ENCODE measurements at regions of chr11 and their contacts with region 1.

Region 1: GRCh38 chr11:126113515-126113957 is 50.9 kb upstream of the CDON start:
- DNase-seq: peak; percentile 84 to 89
- H3K4me3 ChIP-seq: no peak overlapping the region
- H3K27ac ChIP-seq: peak overlapping the region; percentile 80 to 84
- H3K4me1 ChIP-seq: peaks cover 6 to 14% of the 10 kb centered on the region in 2 donors
- H3K27me3 ChIP-seq: no peaks in the 10 kb centered on the region
- CTCF ChIP-seq: no peak
- POLR2A ChIP-seq: no peak

Region 2: DNA sequence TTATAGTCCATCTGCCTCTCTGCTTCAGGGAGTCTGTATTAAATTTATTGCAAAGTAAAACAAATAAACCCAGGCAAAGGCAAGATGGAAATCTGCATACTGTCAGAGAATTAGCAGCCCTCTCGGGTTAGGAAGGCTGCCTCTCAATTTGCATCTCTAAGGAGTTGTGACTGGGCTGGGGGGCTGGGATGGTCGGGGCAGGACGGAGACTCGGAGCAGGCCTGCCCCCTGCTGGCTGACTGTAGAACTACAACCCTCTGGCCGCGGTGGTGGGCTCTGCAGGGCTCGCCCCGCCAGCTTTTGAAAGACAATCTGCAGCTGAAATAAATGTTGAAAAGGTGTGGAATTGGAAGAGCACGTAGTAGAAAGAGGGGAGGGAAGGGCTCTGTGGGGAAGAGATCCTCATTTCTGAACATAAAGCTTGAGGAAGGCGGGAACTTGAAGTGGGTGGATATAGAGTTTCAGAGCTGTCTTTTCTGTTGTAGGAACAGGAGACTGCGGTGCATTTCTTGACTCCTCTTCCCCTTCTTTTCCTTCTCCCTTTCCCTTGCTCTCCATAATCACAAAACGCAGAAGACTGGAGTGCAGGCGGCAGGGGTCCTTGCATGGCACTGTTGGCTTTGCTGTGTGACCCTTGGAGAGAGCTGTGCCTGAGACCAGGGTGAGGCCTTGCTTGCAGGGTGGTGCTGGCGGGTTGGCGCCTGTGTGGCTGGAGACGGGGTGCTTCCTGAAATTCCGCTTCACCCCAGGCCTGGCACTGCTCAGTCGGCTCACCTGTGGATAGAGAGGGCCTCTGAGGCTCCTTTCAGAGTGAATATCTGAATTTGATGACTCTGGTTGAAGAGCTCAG is 971.6 kb before region 1 on chr11:
- intact Hi-C with region 1: no loop called
- DNase-seq: no peak
- H3K4me3 ChIP-seq: no peak overlapping the region
- H3K27ac ChIP-seq: no peak overlapping the region
- H3K4me1 ChIP-seq: no peaks in the 10 kb centered on the region
- H3K27me3 ChIP-seq: peaks cover 0 to 13% of the 10 kb centered on the region in 2 donors
- CTCF ChIP-seq: peak; percentile 70 to 92 (median 78)
- POLR2A ChIP-seq: no peak

Region 3: DNA sequence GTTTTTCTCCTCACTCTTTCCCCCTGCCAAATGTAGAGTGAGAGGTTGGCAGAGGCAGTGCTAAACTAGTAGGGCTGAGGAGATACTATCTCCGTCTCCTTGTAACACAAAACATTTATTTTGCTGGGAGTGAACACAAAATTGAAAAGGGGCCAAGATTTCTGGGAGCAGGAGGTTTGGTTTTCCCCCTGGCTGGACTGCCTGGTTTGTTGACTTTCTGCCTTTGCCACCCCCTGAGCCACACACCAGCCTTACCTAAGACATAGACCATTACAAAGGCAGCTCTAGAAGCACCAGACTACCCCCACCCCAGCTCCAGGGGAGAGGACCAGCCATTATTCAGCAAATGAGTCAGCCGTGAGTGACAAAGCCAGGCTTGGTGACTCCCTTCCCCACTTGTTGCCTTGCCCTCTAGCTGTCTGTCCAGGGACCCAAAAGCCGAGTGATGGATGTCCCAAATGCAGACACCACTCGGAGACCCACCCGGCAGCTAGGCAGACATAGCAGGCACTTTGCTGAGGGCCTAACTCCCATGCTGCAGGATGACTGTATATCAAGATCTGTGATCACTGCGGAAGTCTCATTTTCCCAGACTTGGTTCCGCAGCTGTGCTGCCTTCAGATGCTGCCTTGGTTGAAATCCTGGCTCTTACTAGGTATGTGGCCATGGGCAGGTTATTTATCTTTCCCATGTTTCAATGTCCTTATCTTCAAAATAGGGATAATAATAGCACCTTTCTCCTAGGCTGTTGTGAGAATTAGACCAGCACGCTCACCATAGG is 33.2 kb before region 1 on chr11:
- intact Hi-C with region 1: loop called (anchors 1 kb)
- DNase-seq: peak; percentile 34 to 64
- H3K4me3 ChIP-seq: peak overlapping the region in 1 of 3 donors; percentile 26
- H3K27ac ChIP-seq: peak overlapping the region; percentile 76 to 83
- H3K4me1 ChIP-seq: no peaks in the 10 kb centered on the region
- H3K27me3 ChIP-seq: peaks cover 0 to 5% of the 10 kb centered on the region in 2 donors
- CTCF ChIP-seq: no peak
- POLR2A ChIP-seq: no peak

Region 4: GRCh38 chr11:126088999-126089398 is 24.5 kb before region 1 on chr11:
- intact Hi-C with region 1: loop called (anchors 1 kb)
- DNase-seq: no peak
- H3K4me3 ChIP-seq: no peak overlapping the region
- H3K27ac ChIP-seq: no peak overlapping the region
- H3K4me1 ChIP-seq: no peaks in the 10 kb centered on the region
- H3K27me3 ChIP-seq: no peaks in the 10 kb centered on the region
- CTCF ChIP-seq: no peak
- POLR2A ChIP-seq: no peak

Region 5: DNA sequence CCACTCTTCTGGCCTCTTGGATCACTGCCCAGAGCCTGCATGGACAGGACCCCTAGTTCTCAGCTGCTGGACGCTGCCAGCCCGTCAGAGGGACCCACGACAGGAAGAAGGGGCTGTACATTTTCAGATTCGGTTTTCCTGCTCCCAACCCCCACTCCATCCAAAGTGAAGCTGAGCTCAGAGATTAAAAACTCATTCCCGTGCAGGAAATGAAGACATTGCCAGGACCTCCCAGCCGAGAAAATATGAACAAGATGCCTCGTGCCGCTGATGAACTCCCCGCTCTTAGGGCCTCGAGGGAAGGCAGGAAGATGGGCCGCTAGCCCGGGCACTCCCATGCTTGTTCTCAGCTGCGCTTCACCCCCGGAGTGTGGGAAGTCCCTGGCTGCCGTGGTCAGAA is 61.9 kb after region 1 on chr11:
- intact Hi-C with region 1: no loop called
- DNase-seq: peak in 1 of 2 donors; percentile 26
- H3K4me3 ChIP-seq: no peak overlapping the region
- H3K27ac ChIP-seq: peak overlapping the region; percentile 14 to 69
- H3K4me1 ChIP-seq: no peaks in the 10 kb centered on the region
- H3K27me3 ChIP-seq: no peaks in the 10 kb centered on the region
- CTCF ChIP-seq: no peak
- POLR2A ChIP-seq: no peak

Region 6: GRCh38 chr11:126465573-126466188 is 352.1 kb after region 1 on chr11:
- intact Hi-C with region 1: no loop called
- DNase-seq: no peak
- H3K4me3 ChIP-seq: no peak overlapping the region
- H3K27ac ChIP-seq: no peak overlapping the region
- H3K4me1 ChIP-seq: no peaks in the 10 kb centered on the region
- H3K27me3 ChIP-seq: no peaks in the 10 kb centered on the region
- CTCF ChIP-seq: no peak
- POLR2A ChIP-seq: no peak